ENCODE measurements at regions of chr7 and their contacts with region 1.

Region 1: GRCh38 chr7:79828866-79829265 is 305.8 kb upstream of the GNAI1 start:
- DNase-seq: no peak
- H3K4me3 ChIP-seq: no peak overlapping the region
- H3K27ac ChIP-seq: no peak overlapping the region
- H3K4me1 ChIP-seq: no peaks in the 10 kb centered on the region
- H3K27me3 ChIP-seq: no peaks in the 10 kb centered on the region
- CTCF ChIP-seq: no peak
- POLR2A ChIP-seq: no peak

Region 2: DNA sequence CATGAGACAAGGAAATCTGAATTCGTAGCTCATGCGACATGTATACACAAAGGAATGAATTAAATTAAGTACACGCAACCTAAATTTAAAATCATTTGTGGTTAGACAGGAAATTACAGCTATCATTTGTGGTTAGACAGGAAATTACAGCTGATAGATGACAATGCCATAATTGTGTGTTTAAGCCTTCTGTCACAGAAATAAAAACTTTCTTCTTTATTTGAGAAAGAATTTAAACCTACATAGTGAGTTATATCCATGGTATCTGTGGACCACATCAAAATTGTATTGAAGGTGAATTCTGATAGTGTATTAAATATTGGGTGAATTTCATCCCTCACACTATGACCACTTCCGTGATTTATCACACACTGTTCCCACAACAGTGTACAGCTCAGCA is 738.3 kb before region 1 on chr7:
- intact Hi-C with region 1: no loop called
- DNase-seq: no peak
- H3K4me3 ChIP-seq: no peak overlapping the region
- H3K27ac ChIP-seq: no peak overlapping the region
- H3K4me1 ChIP-seq: no peaks in the 10 kb centered on the region
- H3K27me3 ChIP-seq: no peaks in the 10 kb centered on the region
- CTCF ChIP-seq: no peak
- POLR2A ChIP-seq: no peak

Region 3: GRCh38 chr7:79320741-79321473 is 508.0 kb before region 1 on chr7:
- intact Hi-C with region 1: loop called (anchors 5 kb)
- DNase-seq: no peak
- H3K4me3 ChIP-seq: no peak overlapping the region
- H3K27ac ChIP-seq: no peak overlapping the region
- H3K4me1 ChIP-seq: no peaks in the 10 kb centered on the region
- H3K27me3 ChIP-seq: no peaks in the 10 kb centered on the region
- CTCF ChIP-seq: no peak
- POLR2A ChIP-seq: no peak